Calu3 (cell line): ENCODE measurements at regions of chr5 and their contacts with region 1.

Region 1: DNA sequence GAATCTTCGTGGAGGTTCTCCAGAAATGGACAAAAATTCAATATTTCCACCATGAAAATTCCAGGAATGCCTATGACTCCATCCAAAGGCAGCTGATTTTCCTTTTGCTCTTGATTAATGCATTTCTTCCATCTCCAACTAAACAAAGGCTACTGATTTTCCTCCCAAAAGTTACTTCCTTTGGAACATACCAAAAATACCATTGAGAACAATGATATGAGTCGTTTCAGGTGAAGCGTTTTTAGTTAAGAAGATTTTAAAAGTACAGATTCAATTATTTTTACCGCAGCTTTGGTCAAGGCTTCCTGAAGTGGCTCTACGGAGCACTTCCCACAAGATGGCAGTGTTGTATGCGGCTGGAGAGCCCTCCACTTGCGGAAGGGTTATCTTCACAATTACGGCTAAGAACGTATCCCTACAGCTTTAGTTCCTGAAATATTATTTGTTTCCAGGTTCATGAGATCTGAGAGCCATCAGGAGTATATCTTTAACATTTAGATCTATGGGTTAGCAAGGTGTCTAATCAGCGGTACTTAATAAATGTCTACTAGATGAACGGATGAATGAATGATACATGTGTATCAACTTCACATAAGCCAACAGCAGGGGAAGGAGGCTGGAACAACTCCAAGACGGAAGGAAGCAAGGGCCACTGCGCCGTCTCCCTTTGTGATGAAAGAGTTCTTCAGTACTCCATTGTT is 35.9 kb upstream of the ARSB start:
- DNase-seq: peak; percentile 73
- H3K4me3 Mint-ChIP-seq: peak overlapping the region; percentile 48
- H3K27ac Mint-ChIP-seq: no peak overlapping the region
- H3K4me1 Mint-ChIP-seq: peaks cover 23% of the 10 kb centered on the region
- H3K27me3 Mint-ChIP-seq: no peaks in the 10 kb centered on the region
- CTCF ChIP-seq: peak; percentile 86

Region 2: GRCh38 chr5:78899922-78900362 is 121.1 kb before region 1 on chr5:
- CTCF ChIA-PET with region 1: interaction called, 24 read pairs
- intact Hi-C with region 1: loop called (anchors 1 kb)
- DNase-seq: peak; percentile 65
- H3K4me3 Mint-ChIP-seq: no peak overlapping the region
- H3K27ac Mint-ChIP-seq: no peak overlapping the region
- H3K4me1 Mint-ChIP-seq: peaks cover 1% of the 10 kb centered on the region
- H3K27me3 Mint-ChIP-seq: no peaks in the 10 kb centered on the region
- CTCF ChIP-seq: peak; percentile 92

Region 3: GRCh38 chr5:79062436-79062835 is 41.4 kb after region 1 on chr5:
- CTCF ChIA-PET with region 1: no interaction called
- intact Hi-C with region 1: no loop called
- DNase-seq: no peak
- H3K4me3 Mint-ChIP-seq: no peak overlapping the region
- H3K27ac Mint-ChIP-seq: no peak overlapping the region
- H3K4me1 Mint-ChIP-seq: peaks cover 8% of the 10 kb centered on the region
- H3K27me3 Mint-ChIP-seq: no peaks in the 10 kb centered on the region
- CTCF ChIP-seq: no peak

Region 4: DNA sequence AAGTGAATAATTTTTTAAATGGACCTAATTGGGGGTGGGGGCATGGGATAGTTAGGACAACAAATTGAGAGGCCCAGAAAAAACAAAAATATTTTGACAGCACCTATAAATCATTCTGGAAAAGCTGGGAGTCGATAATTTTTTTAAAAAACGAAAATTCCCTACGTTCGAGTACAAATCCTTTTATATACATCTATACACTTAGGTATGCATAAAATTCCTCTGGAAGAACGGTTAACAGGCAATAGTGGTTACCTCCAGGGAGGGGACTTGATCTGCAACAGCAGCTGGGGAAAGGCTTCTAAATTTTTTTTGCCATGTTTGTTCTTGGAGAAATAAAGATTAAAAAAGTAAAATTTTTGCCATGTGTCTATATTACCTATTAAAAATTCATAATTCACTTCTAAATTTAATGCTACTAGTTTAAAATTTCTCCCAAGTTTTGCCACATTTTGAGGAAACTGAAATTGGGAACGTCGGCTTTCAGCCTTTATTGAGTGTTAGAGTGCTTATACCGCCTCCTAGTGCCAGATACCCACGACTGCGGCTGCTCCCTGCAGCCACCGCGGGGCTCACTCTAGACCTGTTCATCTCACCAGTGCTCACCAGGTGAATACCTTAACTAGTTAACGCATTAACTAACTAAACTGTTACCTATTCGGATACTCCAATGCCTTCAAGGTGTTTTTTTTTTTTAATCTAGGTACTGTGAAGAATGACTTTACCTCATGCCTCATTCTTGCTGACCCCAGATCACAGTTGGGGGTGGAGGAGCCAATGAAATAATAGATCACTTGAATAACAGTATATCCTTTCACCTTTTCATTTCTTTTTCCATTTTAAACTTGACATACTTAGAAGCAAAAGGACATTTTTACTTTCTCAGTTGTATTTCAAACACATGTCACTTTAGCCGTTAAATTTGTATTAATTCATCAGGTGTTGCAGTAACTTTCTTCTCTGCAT is 88.8 kb after region 1 on chr5:
- CTCF ChIA-PET with region 1: interaction called, 3 read pairs
- intact Hi-C with region 1: loop called (anchors 1 kb)
- DNase-seq: peak; percentile 52
- H3K4me3 Mint-ChIP-seq: no peak overlapping the region
- H3K27ac Mint-ChIP-seq: no peak overlapping the region
- H3K4me1 Mint-ChIP-seq: no peaks in the 10 kb centered on the region
- H3K27me3 Mint-ChIP-seq: peaks cover 90% of the 10 kb centered on the region
- CTCF ChIP-seq: peak; percentile 63

Region 5: GRCh38 chr5:79464695-79465332 is 443.8 kb after region 1 on chr5:
- CTCF ChIA-PET with region 1: interaction called, 5 read pairs
- intact Hi-C with region 1: loop called (anchors 2 kb)
- DNase-seq: no peak
- H3K4me3 Mint-ChIP-seq: no peak overlapping the region
- H3K27ac Mint-ChIP-seq: no peak overlapping the region
- H3K4me1 Mint-ChIP-seq: no peaks in the 10 kb centered on the region
- H3K27me3 Mint-ChIP-seq: no peaks in the 10 kb centered on the region
- CTCF ChIP-seq: peak; percentile 68

Region 6: GRCh38 chr5:79857714-79858409 is 836.9 kb after region 1 on chr5:
- CTCF ChIA-PET with region 1: interaction called, 3 read pairs
- intact Hi-C with region 1: loop called (anchors 2 kb)
- DNase-seq: peak; percentile 83
- H3K4me3 Mint-ChIP-seq: no peak overlapping the region
- H3K27ac Mint-ChIP-seq: no peak overlapping the region
- H3K4me1 Mint-ChIP-seq: no peaks in the 10 kb centered on the region
- H3K27me3 Mint-ChIP-seq: no peaks in the 10 kb centered on the region
- CTCF ChIP-seq: peak; percentile 97